ENCODE measurements at regions of chr15 and their contacts with region 1.

Region 1: GRCh38 chr15:71800835-71801745 is 9.3 kb upstream of the NR2E3 start:
- DNase-seq: peak; percentile 77
- H3K4me3 Mint-ChIP-seq: no peak overlapping the region
- H3K27ac Mint-ChIP-seq: no peak overlapping the region
- H3K4me1 Mint-ChIP-seq: peaks cover 6% of the 10 kb centered on the region
- H3K27me3 Mint-ChIP-seq: no peaks in the 10 kb centered on the region
- CTCF ChIP-seq: peak; percentile 93

Region 2: GRCh38 chr15:70974004-70974832 is 826.9 kb before region 1 on chr15:
- CTCF ChIA-PET with region 1: interaction called, 7 read pairs
- POLR2A ChIA-PET with region 1: no interaction called
- intact Hi-C with region 1: loop called (anchors 5 kb)
- DNase-seq: peak; percentile 52
- H3K4me3 Mint-ChIP-seq: no peak overlapping the region
- H3K27ac Mint-ChIP-seq: no peak overlapping the region
- H3K4me1 Mint-ChIP-seq: no peaks in the 10 kb centered on the region
- H3K27me3 Mint-ChIP-seq: no peaks in the 10 kb centered on the region
- CTCF ChIP-seq: peak; percentile 43

Region 3: DNA sequence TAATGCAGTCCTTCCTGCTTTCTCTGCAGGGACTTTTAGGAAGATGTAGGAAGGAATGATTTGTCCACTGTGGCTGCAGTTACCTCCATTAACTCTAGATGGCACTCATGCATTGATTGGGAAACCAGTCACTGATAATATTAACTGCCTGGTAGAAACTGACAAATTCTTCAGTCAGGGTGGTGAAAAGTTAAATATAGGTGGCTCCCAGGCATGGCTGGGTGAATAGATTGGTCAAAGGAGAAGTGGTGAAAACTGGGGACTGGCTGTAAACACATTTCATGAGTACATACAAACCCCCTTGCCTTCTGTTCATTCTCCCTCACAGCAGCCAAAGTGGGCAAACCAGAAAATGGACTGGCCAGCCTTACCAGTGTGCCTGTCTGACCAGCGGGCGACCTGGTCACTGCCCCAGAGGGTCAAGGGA is 352.4 kb before region 1 on chr15:
- CTCF ChIA-PET with region 1: interaction called, 15 read pairs
- POLR2A ChIA-PET with region 1: interaction called, 3 read pairs
- intact Hi-C with region 1: loop called (anchors 1 kb)
- DNase-seq: peak; percentile 79
- H3K4me3 Mint-ChIP-seq: no peak overlapping the region
- H3K27ac Mint-ChIP-seq: peak overlapping the region; percentile 39
- H3K4me1 Mint-ChIP-seq: no peaks in the 10 kb centered on the region
- H3K27me3 Mint-ChIP-seq: no peaks in the 10 kb centered on the region
- CTCF ChIP-seq: peak; percentile 86

Region 4: DNA sequence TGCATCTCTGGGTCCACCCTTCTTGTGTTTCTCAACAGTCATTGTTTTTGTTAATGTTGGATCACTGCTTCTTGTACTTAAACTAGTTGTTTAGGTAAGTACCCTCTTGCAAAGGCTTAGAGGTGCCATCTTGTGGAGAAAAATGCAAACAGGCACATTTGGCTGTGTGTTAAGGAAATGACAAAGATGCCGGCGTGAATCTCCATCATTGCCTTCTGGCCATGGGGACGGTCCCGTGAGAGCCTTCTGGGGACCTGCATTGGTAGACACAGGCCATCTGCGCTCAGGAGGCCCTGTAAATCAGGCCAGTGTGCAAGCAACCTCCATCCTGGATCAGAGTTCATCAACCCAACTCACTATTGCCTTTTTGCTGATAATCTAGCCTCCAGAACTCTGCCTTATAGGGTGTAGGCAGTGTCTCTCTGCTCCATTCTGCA is 149.3 kb before region 1 on chr15:
- CTCF ChIA-PET with region 1: interaction called, 3 read pairs
- POLR2A ChIA-PET with region 1: no interaction called
- intact Hi-C with region 1: loop called (anchors 5 kb)
- DNase-seq: peak; percentile 78
- H3K4me3 Mint-ChIP-seq: no peak overlapping the region
- H3K27ac Mint-ChIP-seq: peak overlapping the region; percentile 75
- H3K4me1 Mint-ChIP-seq: peaks cover 12% of the 10 kb centered on the region
- H3K27me3 Mint-ChIP-seq: no peaks in the 10 kb centered on the region
- CTCF ChIP-seq: peak; percentile 68

Region 5: DNA sequence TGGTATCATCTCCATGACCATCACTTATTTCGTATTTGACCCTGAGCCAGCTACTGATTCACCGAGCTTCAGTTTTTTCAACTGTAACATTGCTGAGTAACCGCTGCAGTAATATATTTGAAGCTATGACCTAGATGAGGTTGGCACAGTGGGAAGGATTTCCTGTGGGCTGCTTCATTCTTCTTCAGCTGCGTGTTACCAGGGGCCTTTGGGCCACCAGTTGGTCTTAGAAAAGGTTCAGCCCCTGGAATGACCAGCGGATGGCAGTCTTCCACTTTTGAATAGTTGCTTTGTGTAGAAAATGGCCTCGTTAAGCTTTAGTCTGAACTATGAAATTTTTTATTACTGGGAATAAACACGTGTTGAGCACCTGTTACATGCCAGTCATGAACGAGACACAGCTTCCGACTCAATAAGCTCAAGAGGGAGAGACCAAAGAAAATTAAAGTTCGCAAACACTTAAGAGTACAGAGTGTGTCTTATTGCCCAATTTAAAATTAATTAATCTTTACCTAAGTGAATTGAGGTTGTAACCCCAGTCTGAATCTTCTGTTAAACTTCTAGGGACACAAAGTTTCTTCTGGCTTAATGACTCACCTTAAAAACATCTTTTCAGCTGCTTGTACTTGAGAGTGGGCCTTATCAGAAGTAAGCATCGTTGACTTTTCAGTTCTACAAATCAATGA is 48.3 kb before region 1 on chr15:
- CTCF ChIA-PET with region 1: interaction called, 51 read pairs
- POLR2A ChIA-PET with region 1: interaction called, 3 read pairs
- intact Hi-C with region 1: loop called (anchors 1 kb)
- DNase-seq: peak; percentile 91
- H3K4me3 Mint-ChIP-seq: peak overlapping the region; percentile 33
- H3K27ac Mint-ChIP-seq: peak overlapping the region; percentile 84
- H3K4me1 Mint-ChIP-seq: peaks cover 25% of the 10 kb centered on the region
- H3K27me3 Mint-ChIP-seq: no peaks in the 10 kb centered on the region
- CTCF ChIP-seq: peak; percentile 28